ENCODE measurements at regions of chr1 and their contacts with region 1.

Region 1: GRCh38 chr1:46603858-46604549 is at the start of gene MKNK1:
- DNase-seq: peak; percentile 99
- H3K4me3 Mint-ChIP-seq: peak within 1 kb of the TSS; percentile 91
- H3K27ac Mint-ChIP-seq: peak within 1 kb of the TSS; percentile 88
- H3K4me1 Mint-ChIP-seq: peaks cover 67% of the 10 kb centered on the region
- H3K27me3 Mint-ChIP-seq: no peaks in the 10 kb centered on the region
- total RNA-seq, gene MKNK1: 48.7 TPM in 2 replicates

Region 2: GRCh38 chr1:46616277-46617107 is 12.5 kb after region 1 on chr1 and contains the start of gene MOB3C:
- intact Hi-C with region 1: loop called (anchors 1 kb)
- DNase-seq: peak; percentile 51
- H3K4me3 Mint-ChIP-seq: peak within 1 kb of the TSS; percentile 90
- H3K27ac Mint-ChIP-seq: peak within 1 kb of the TSS; percentile 87
- H3K4me1 Mint-ChIP-seq: peaks cover 51% of the 10 kb centered on the region
- H3K27me3 Mint-ChIP-seq: peaks cover 2% of the 10 kb centered on the region
- total RNA-seq, gene MOB3C: 16.9 and 17.0 TPM in 2 replicates

Region 3: GRCh38 chr1:46653405-46653958 is 49.5 kb after region 1 on chr1:
- intact Hi-C with region 1: no loop called
- DNase-seq: no peak
- H3K4me3 Mint-ChIP-seq: no peak overlapping the region
- H3K27ac Mint-ChIP-seq: no peak overlapping the region
- H3K4me1 Mint-ChIP-seq: peaks cover 21% of the 10 kb centered on the region
- H3K27me3 Mint-ChIP-seq: no peaks in the 10 kb centered on the region

Region 4: GRCh38 chr1:46667782-46668760 is 64.1 kb after region 1 on chr1 and contains the start of gene ATPAF1:
- intact Hi-C with region 1: loop called (anchors 1 kb)
- DNase-seq: peak; percentile 62
- H3K4me3 Mint-ChIP-seq: peak within 1 kb of the TSS; percentile 85
- H3K27ac Mint-ChIP-seq: peak within 1 kb of the TSS; percentile 58
- H3K4me1 Mint-ChIP-seq: peaks cover 25% of the 10 kb centered on the region
- H3K27me3 Mint-ChIP-seq: no peaks in the 10 kb centered on the region
- total RNA-seq, gene ATPAF1: 40.9 and 46.3 TPM in 2 replicates

Measured in activated T-helper 1 cell treated with anti-CD3 and anti-CD28 coated beads, Interleukin-12 subunit alpha, Interleukin-12 subunit beta, Interleukin-2, Interleukin-4 antibody, amounts not matched to agents 30 ng/mL and 10 ng/mL and 1 ng/mL, durations not matched to agents 14 hours and 24 hours and 36 hours (primary cell).